ENCODE measurements at regions of chr11 and their contacts with region 1.

Region 1: GRCh38 chr11:86202013-86202336 is 42.6 kb upstream of the EED start:
- DNase-seq: peak in 1 of 5 donors; percentile 8
- H3K4me3 ChIP-seq: peak overlapping the region; percentile 44 to 55
- H3K4me3 Mint-ChIP-seq: no peak overlapping the region
- H3K27ac ChIP-seq: peak overlapping the region; percentile 52
- H3K27ac Mint-ChIP-seq: no peak overlapping the region
- H3K4me1 ChIP-seq: peaks cover 15% of the 10 kb centered on the region
- H3K4me1 Mint-ChIP-seq: no peaks in the 10 kb centered on the region
- H3K27me3 ChIP-seq: no peaks in the 10 kb centered on the region
- H3K27me3 Mint-ChIP-seq: no peaks in the 10 kb centered on the region

Region 2: GRCh38 chr11:86041975-86042378 is 160.0 kb before region 1 on chr11:
- CTCF ChIA-PET with region 1: interaction called, 173 read pairs
- POLR2A ChIA-PET with region 1: interaction called, 7 read pairs
- intact Hi-C with region 1: loop called (anchors 2 kb)
- DNase-seq: peak; percentile 72 to 76 (median 74)
- H3K4me3 ChIP-seq: no peak overlapping the region
- H3K4me3 Mint-ChIP-seq: peak overlapping the region in 4 of 8 donors; percentile 0 to 35 (median 4)
- H3K27ac ChIP-seq: no peak overlapping the region
- H3K27ac Mint-ChIP-seq: peak overlapping the region; percentile 20 to 84 (median 64)
- H3K4me1 ChIP-seq: peaks cover 58% of the 10 kb centered on the region
- H3K4me1 Mint-ChIP-seq: peaks cover 49 to 73% (median 62%) of the 10 kb centered on the region in 4 donors
- H3K27me3 ChIP-seq: no peaks in the 10 kb centered on the region
- H3K27me3 Mint-ChIP-seq: no peaks in the 10 kb centered on the region

Region 3: GRCh38 chr11:86232556-86232955 is 30.6 kb after region 1 on chr11:
- CTCF ChIA-PET with region 1: no interaction called
- POLR2A ChIA-PET with region 1: no interaction called
- intact Hi-C with region 1: no loop called
- DNase-seq: no peak
- H3K4me3 ChIP-seq: no peak overlapping the region
- H3K4me3 Mint-ChIP-seq: no peak overlapping the region
- H3K27ac ChIP-seq: no peak overlapping the region
- H3K27ac Mint-ChIP-seq: no peak overlapping the region
- H3K4me1 ChIP-seq: no peaks in the 10 kb centered on the region
- H3K4me1 Mint-ChIP-seq: peaks cover 0 to 4% (median 0%) of the 10 kb centered on the region in 4 donors
- H3K27me3 ChIP-seq: no peaks in the 10 kb centered on the region
- H3K27me3 Mint-ChIP-seq: no peaks in the 10 kb centered on the region

Region 4: DNA sequence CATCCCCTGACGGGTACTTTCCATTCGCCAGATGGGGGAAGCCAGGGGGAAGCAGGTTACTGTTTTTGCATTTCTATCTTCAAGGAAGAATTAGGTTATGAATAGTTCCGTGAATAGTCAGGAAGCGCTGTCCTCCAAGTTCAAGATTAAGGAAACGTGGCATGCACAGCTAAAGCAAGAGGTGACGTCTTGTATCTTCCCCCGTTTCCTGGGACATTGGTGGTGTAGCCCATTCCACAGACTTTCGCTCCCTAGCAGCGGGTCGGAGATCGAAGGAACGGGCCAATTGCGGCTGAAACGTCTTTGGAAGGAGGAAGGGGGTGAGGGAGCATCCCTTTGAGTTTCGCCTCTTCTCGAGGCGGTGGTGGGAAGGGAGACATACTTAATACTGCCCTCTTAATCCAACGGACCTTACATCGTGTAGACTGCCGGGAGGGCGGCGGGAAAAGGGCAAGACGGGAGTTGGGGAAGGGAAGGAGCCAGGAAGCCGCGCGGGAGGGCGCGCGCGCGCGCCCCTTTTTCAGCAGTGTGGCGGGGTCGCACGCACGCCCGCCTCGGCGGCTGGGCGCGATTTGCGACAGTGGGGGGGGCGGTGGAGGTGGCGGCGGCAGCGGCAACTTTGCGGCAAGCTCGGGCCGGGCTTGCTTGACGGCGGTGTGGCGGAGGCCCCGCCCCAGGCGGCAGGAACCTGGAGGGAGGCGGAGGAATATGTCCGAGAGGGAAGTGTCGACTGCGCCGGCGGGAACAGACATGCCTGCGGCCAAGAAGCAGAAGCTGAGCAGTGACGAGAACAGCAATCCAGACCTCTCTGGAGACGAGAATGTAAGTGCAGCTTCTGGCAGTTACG is 42.8 kb after region 1 on chr11 and contains the start of gene EED:
- CTCF ChIA-PET with region 1: interaction called, 5 read pairs
- POLR2A ChIA-PET with region 1: interaction called, 14 read pairs
- intact Hi-C with region 1: loop called (anchors 5 kb)
- DNase-seq: peak; percentile 92 to 96 (median 93)
- H3K4me3 ChIP-seq: peak within 1 kb of the TSS; percentile 98 to 99
- H3K4me3 Mint-ChIP-seq: no peak within 1 kb of the TSS
- H3K27ac ChIP-seq: peak within 1 kb of the TSS; percentile 99
- H3K27ac Mint-ChIP-seq: no peak within 1 kb of the TSS
- H3K4me1 ChIP-seq: peaks cover 54% of the 10 kb centered on the region
- H3K4me1 Mint-ChIP-seq: peaks cover 0 to 35% (median 13%) of the 10 kb centered on the region in 4 donors
- H3K27me3 ChIP-seq: no peaks in the 10 kb centered on the region
- H3K27me3 Mint-ChIP-seq: peaks cover 0 to 2% of the 10 kb centered on the region in 2 donors
- total RNA-seq, gene EED: 47.1 to 51.0 TPM